ENCODE measurements at regions of chr2 and their contacts with region 1.

Region 1: GRCh38 chr2:190408538-190409271 is 550 bp downstream of the MFSD6 start:
- DNase-seq: peak; percentile 52
- H3K4me3 ChIP-seq: peak overlapping the region; percentile 65
- H3K27ac ChIP-seq: peak overlapping the region; percentile 26
- H3K4me1 ChIP-seq: peaks cover 9% of the 10 kb centered on the region
- H3K27me3 ChIP-seq: no peaks in the 10 kb centered on the region
- CTCF ChIP-seq: no peak

Region 2: GRCh38 chr2:189943009-189943408 is 465.7 kb before region 1 on chr2:
- CTCF ChIA-PET with region 1: no interaction called
- POLR2A ChIA-PET with region 1: no interaction called
- intact Hi-C with region 1: no loop called
- DNase-seq: no peak
- H3K4me3 ChIP-seq: no peak overlapping the region
- H3K27ac ChIP-seq: no peak overlapping the region
- H3K4me1 ChIP-seq: no peaks in the 10 kb centered on the region
- H3K27me3 ChIP-seq: no peaks in the 10 kb centered on the region
- CTCF ChIP-seq: no peak

Region 3: GRCh38 chr2:190088917-190089316 is 319.8 kb before region 1 on chr2:
- CTCF ChIA-PET with region 1: no interaction called
- POLR2A ChIA-PET with region 1: no interaction called
- intact Hi-C with region 1: no loop called
- DNase-seq: peak; percentile 76
- H3K4me3 ChIP-seq: no peak overlapping the region
- H3K27ac ChIP-seq: no peak overlapping the region
- H3K4me1 ChIP-seq: peaks cover 3% of the 10 kb centered on the region
- H3K27me3 ChIP-seq: no peaks in the 10 kb centered on the region
- CTCF ChIP-seq: peak; percentile 75

Region 4: DNA sequence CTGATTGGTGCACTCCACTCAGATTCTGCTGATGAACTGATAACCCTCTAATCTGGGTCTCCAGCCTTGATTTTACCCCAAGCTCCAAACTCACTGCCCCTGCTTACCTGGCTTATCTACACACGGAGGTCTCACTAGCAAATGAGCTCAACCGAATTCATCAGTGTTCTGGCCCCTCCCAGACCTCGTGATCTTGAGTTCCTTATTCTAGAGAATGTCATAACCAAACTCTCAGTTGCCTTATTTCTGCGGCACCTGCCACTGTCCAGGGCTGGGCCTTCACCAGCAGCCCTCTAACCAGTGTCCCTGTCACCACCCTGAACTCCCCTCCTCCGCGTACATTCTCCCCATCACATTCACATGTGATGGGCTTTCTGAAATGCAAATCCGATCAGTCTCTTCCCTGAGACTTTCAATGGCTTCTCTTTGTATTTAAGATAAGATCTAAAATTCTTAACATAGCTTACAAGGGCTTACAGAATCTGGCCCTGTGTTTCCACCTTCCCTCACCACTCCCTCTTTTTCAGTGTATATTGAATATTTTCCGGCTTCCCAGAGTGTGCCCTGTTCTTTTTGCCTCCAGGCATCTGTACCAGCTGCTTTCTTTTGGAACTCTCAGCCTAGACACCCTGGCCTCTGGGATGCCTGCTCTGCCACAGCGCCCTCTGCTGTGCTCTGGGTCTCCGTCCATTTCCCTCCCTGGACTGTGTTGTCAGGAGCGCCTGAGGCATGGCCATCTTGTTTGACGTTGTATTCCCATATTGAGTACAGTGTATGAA is 271.3 kb after region 1 on chr2:
- CTCF ChIA-PET with region 1: no interaction called
- POLR2A ChIA-PET with region 1: no interaction called
- intact Hi-C with region 1: loop called (anchors 10 kb)
- DNase-seq: peak; percentile 84
- H3K4me3 ChIP-seq: no peak overlapping the region
- H3K27ac ChIP-seq: no peak overlapping the region
- H3K4me1 ChIP-seq: peaks cover 5% of the 10 kb centered on the region
- H3K27me3 ChIP-seq: no peaks in the 10 kb centered on the region
- CTCF ChIP-seq: peak; percentile 90